ENCODE measurements at regions of chr9 and their contacts with region 1.

Region 1: GRCh38 chr9:77751341-77752091 is 103.4 kb upstream of the GNA14 start:
- DNase-seq: no peak
- H3K4me3 ChIP-seq: no peak overlapping the region
- H3K27ac ChIP-seq: no peak overlapping the region
- H3K4me1 ChIP-seq: peaks cover 29% of the 10 kb centered on the region
- H3K27me3 ChIP-seq: no peaks in the 10 kb centered on the region
- CTCF ChIP-seq: peak; percentile 43 to 66 (median 56)
- POLR2A ChIP-seq: no peak

Region 2: GRCh38 chr9:77433675-77434445 is 317.7 kb before region 1 on chr9:
- intact Hi-C with region 1: loop called (anchors 5 kb)
- DNase-seq: no peak
- H3K4me3 ChIP-seq: no peak overlapping the region
- H3K27ac ChIP-seq: no peak overlapping the region
- H3K4me1 ChIP-seq: peaks cover 7% of the 10 kb centered on the region
- H3K27me3 ChIP-seq: no peaks in the 10 kb centered on the region
- CTCF ChIP-seq: peak; percentile 71 to 85 (median 81)
- POLR2A ChIP-seq: no peak

Region 3: DNA sequence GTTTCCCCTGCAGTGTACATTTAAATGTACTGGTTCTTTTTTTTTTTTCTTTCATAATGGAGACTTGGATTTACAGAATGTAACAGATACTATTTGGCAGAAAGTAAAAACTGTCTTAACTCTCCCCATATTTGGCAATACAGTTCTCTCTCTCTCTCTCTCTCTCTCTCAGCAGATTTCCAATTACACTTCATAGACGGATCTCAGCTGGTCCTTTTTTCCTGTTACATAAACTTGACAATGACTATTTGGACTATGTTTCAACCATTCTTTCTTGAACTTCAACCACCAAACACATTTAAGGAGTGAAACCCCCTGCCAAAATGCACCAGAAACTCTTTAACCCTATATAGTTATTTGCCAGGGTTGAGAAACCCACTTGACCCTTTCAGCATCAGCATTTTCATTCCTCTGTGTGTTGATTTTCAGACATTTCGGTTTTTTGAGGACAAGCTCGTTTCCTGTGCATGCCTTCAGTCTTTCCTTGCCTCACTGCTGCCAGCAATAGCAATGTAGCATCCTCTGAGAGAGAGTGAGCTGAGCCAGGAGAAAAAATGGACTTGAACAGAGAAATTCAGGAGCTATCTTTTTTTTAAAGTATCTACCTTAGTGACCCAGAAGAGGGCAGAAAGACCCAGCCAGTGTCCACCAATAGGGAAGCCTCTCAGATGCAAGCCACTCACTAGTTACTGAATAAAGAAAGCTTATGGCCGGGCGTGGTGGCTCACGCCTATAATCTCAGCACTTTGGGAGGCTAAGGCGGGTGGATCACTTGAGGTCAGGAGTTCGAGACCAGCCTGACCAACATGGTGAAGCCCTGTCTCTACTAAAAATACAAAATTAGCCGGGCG is 77.3 kb before region 1 on chr9:
- intact Hi-C with region 1: no loop called
- DNase-seq: no peak
- H3K4me3 ChIP-seq: no peak overlapping the region
- H3K27ac ChIP-seq: no peak overlapping the region
- H3K4me1 ChIP-seq: peaks cover 24% of the 10 kb centered on the region
- H3K27me3 ChIP-seq: no peaks in the 10 kb centered on the region
- CTCF ChIP-seq: no peak
- POLR2A ChIP-seq: no peak

Region 4: DNA sequence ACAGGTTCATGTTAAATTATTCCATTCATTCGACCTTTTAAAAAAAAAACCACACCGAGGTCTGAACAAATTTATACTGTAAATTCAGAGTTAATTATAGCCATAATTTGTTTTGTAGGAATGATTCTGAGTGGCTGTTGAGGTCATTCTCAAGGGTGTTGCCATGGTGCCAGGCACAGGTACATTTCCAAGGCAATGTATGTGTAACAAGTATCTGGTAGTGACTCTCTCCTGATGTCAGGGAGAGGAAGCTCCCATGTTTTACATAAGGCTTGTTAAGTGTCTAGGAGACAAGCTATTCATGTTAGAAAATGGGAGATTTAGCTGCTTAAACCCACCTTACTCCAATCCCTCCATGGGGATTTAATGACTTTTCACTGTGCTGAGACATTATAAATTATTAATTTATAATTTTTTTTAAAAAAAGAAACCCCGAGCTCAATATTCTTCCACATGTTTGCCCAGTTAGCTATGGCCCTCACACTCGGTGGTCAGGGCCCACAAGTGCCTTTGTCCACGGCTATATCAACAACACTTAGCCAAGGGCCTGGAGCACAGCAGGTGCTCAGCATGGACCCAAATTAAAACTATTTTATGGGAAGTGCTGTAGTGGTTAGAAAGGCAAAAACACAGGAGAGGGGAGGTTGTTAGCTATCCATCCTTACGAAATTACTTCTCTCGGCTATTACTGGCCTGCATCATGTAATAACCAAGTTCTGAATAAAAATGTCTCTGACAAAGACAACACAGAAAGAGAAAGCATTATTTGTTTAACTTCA is 51.2 kb after region 1 on chr9:
- intact Hi-C with region 1: no loop called
- DNase-seq: no peak
- H3K4me3 ChIP-seq: no peak overlapping the region
- H3K27ac ChIP-seq: no peak overlapping the region
- H3K4me1 ChIP-seq: peaks cover 8% of the 10 kb centered on the region
- H3K27me3 ChIP-seq: no peaks in the 10 kb centered on the region
- CTCF ChIP-seq: no peak
- POLR2A ChIP-seq: no peak

Region 5: GRCh38 chr9:77820293-77820954 is 68.9 kb after region 1 on chr9:
- intact Hi-C with region 1: no loop called
- DNase-seq: no peak
- H3K4me3 ChIP-seq: no peak overlapping the region
- H3K27ac ChIP-seq: peak overlapping the region; percentile 40
- H3K4me1 ChIP-seq: peaks cover 18% of the 10 kb centered on the region
- H3K27me3 ChIP-seq: no peaks in the 10 kb centered on the region
- CTCF ChIP-seq: no peak
- POLR2A ChIP-seq: no peak